Aorta (tissue), 5 donors: ENCODE measurements at regions of chr11 and their contacts with region 1.

Region 1: DNA sequence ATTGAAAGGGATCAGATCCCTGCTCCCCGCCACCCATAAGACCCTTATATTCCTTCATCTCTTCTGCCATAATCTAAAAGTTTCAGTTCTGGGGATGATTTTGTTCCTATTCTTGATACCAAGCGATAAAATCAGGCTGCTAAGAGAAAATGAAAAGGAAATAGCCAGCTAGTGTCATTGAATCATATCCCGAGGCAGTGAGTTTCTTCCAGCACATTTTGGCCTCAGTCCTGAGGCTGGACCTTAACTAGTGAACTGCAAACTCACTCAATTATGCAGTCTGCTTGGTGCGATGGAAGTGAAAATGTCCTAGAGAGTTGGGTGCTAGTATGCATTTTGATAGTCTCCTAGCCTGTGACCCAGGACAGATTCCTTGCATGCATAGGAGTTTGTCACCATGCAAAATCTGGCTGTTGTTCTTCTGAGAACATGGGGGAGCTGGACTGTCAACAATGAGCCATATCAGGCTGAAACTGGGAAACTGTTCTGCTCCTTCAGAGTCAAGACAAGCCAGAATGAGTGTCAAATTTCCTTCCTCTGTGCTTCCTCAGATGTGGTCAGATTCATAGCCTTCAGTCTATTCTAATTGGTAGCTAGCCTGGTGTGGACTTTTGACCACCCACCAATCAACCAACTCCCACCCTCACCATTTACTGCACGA is 102.9 kb downstream of the CCDC81 start:
- DNase-seq: peak in 1 of 2 donors; percentile 59
- ATAC-seq: peak; percentile 50
- H3K4me3 ChIP-seq: no peak overlapping the region
- H3K27ac ChIP-seq: peak overlapping the region in 1 of 2 donors; percentile 17
- H3K4me1 ChIP-seq: peaks cover 0 to 6% of the 10 kb centered on the region in 2 donors
- H3K27me3 ChIP-seq: no peaks in the 10 kb centered on the region

Region 2: DNA sequence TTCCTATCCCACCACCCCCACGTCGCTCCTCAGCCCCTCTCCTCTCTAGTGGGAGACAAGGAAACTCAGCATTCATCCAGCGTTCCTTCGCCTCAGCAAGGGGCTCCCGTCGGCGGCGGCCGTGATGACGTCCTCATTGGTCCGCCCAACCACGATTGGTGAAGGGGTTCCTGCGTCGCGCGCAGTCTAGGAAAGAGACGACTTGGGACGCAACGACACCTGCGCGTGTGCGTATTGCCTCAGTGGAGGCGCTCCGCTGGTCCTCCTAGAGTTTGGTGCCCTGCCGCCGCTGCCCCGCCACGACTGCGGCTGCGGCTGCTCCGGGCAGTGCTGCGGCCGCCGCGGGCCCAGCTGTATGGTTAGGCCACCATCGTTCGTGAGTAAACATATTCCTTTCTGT is 46.4 kb before region 1 on chr11:
- intact Hi-C with region 1: no loop called
- DNase-seq: peak in 1 of 2 donors; percentile 57
- ATAC-seq: no peak
- H3K4me3 ChIP-seq: no peak overlapping the region
- H3K27ac ChIP-seq: no peak overlapping the region
- H3K4me1 ChIP-seq: no peaks in the 10 kb centered on the region
- H3K27me3 ChIP-seq: no peaks in the 10 kb centered on the region

Region 3: DNA sequence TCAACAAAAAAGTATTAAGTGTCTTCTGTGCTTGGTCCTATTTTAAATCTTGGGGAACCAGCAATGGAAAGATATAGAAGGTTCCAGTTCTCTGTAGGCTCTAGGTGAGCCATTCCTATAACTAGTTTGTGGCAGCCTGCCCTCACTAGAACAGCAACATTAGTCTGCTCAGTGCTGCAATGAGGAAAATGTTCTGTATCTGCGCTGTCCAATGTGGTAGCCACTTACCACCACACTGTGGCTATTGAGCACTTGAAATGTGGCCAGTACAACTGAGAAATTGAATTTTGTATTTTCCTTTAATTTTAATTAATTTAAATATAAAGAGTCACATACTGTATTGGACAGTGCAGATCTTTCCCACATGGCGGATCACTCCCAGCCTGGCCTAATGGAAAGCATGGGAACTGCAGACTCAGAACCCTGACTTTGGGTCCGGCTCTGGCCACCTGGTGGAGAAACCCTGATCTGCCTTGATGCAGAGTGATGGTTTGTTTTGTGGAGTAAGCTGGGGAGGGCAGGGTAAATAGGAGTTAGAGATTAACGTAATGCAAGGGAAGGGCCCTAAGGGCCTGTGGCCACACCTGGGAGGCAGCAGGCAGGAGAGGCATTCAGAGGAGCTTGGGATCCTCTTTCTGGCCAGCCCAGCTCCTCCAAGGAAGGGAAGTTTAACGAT is 93.8 kb after region 1 on chr11:
- intact Hi-C with region 1: loop called in 1 of 2 experiments (anchors 10 kb)
- DNase-seq: no peak
- ATAC-seq: no peak
- H3K4me3 ChIP-seq: no peak overlapping the region
- H3K27ac ChIP-seq: no peak overlapping the region
- H3K4me1 ChIP-seq: peaks cover 0 to 3% of the 10 kb centered on the region in 2 donors
- H3K27me3 ChIP-seq: no peaks in the 10 kb centered on the region

Region 4: DNA sequence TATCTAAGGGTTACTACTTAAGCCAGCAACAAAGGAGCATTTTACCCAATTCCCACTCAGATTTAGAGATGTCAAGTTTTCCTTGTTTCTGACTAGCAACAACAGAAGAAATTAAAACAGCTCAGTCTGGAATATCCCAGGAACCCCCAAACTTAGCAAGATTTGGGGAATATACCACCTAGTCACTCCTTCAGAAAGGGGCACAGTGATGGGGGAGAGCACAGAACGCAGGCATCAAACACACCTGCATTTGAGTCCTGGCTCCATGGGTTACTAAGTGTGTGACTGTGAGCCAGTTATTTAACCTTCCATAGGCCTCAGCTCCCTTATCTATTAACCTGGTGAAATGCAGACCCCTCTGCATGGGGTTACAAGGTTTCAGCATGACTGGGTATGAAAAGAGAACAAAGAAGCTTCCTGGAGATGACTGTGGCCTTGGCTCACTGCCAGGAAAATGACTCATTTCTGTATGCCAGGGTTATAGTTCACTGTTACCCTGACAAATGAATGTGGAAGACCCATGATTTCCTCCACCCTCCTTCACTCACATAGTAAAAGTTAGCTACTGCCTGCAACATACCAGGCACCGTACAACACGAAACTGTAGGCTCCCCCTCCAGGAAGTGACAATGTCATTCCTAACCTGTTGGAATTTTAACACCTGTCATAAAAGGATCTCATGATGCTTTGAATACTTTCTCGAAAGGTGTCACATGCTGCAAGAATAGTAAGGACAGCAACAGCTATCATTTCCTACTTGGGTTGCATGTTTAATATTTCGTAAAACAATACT is 115.2 kb after region 1 on chr11:
- intact Hi-C with region 1: no loop called
- DNase-seq: peak in 1 of 2 donors; percentile 85
- ATAC-seq: peak; percentile 22
- H3K4me3 ChIP-seq: no peak overlapping the region
- H3K27ac ChIP-seq: no peak overlapping the region
- H3K4me1 ChIP-seq: peaks cover 4 to 7% of the 10 kb centered on the region in 2 donors
- H3K27me3 ChIP-seq: no peaks in the 10 kb centered on the region